ENCODE measurements at regions of chr11 and their contacts with region 1.

Region 1: DNA sequence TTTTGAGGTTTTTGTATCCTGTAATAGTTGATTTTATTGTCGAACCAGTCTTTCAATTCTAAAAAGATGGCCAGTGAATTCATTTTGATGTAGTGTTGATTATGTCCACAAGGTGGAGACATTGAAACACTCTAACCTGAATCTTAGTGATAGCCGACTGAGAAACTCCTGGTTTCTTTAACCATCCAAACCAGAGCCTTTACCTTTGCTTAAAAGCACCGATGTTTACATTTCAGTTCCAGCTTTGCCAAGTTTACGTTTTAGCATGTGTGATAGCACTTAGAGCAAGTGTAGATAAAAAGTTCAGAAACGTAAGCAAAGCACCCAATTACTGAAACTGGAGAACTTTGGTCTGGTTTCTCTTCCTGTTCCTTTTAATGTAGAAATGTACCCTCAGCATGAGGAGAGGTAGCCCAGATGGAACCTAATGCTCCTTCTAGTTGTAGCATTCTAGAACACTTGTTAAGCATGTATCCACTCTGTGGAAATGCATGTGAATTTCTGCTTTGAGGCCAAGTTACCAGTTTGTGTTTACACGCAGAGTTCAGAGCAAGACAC is 208.6 kb downstream of the DBX1 start:
- DNase-seq: no peak
- H3K4me3 ChIP-seq: no peak overlapping the region
- H3K27ac ChIP-seq: peak overlapping the region in 1 of 2 donors; percentile 36
- H3K4me1 ChIP-seq: peaks cover 4% of the 10 kb centered on the region
- H3K27me3 ChIP-seq: no peaks in the 10 kb centered on the region
- CTCF ChIP-seq: peak; percentile 18 to 73 (median 73)
- EP300 ChIP-seq: no peak
- POLR2A ChIP-seq: no peak

Region 2: DNA sequence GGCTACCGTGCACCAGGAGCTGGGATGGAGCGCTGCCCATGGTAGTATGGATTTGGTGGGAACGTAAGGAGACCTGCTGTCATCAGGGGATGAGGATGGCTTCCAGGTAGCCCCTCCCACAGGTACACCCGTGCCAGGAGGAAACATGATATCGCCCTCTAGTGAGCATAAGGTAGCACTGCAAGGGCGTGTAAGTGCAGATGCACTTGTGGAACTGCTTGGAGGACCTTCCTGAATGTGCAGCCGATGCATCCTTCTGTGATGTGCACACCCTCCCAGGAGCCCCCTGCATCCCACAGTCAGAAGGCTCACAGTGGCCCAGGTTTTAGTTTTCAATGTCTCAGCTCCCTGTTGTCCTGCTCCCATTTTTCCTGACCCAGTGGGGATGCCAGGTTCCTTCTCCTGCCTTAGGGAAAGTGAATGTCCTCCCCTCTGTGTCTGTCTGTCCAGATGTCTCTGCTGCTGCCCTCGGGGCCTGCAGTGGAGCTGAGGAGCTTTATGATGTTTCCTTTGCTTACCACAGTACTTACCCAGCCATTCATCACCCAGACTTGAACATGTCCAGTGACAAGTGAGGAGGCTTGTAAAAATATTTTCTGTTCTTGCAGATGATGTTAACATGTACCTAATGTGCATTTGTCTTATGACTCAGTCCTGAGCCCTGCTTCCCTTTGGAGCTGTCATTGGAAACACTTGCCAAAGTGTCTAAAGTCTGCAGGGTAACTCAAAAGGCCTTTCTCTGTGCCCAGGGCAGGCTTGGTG is 159.5 kb after region 1 on chr11:
- intact Hi-C with region 1: loop called in 2 of 4 experiments (anchors 5 kb)
- DNase-seq: peak in 3 of 5 donors; percentile 38 to 45 (median 44)
- H3K4me3 ChIP-seq: no peak overlapping the region
- H3K27ac ChIP-seq: peak overlapping the region in 1 of 2 donors; percentile 84
- H3K4me1 ChIP-seq: peaks cover 4% of the 10 kb centered on the region
- H3K27me3 ChIP-seq: no peaks in the 10 kb centered on the region
- CTCF ChIP-seq: peak; percentile 45 to 54 (median 54)
- EP300 ChIP-seq: no peak
- POLR2A ChIP-seq: no peak

Region 3: DNA sequence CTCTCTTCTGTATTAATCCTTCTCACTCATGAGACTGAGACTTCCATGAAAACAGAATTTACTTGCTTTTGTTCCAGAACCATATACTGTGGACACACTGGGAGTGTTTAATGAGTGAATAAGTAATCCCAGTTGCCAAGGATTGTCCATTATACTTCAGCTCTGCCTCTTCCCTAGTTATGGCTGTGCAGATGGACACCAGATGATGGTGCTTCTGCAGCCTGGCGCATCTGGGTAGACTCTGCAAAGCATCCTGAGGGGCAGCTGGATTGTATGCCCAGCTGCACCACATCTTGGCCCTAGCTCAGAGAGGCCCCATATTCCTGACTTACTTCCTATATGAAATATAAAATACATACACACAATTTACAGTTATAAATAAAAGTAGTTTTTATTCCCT is 165.2 kb after region 1 on chr11:
- intact Hi-C with region 1: loop called in 2 of 4 experiments (anchors 5 kb)
- DNase-seq: no peak
- H3K4me3 ChIP-seq: no peak overlapping the region
- H3K27ac ChIP-seq: no peak overlapping the region
- H3K4me1 ChIP-seq: peaks cover 4% of the 10 kb centered on the region
- H3K27me3 ChIP-seq: no peaks in the 10 kb centered on the region
- CTCF ChIP-seq: no peak
- EP300 ChIP-seq: no peak
- POLR2A ChIP-seq: no peak

Measured in ovary (tissue), 10 donors.